AG04450 (cell line): ENCODE measurements at regions of chr10 and their contacts with region 1.

Region 1: GRCh38 chr10:124403548-124403947 is 15.2 kb downstream of the OAT start:
- DNase-seq: peak; percentile 45
- H3K4me3 ChIP-seq: no peak overlapping the region
- H3K27ac ChIP-seq: no peak overlapping the region
- H3K27me3 ChIP-seq: no peaks in the 10 kb centered on the region
- CTCF ChIP-seq: peak; percentile 75

Region 2: GRCh38 chr10:123994417-123995081 is 409.0 kb before region 1 on chr10:
- CTCF ChIA-PET with region 1: interaction called, 57 read pairs
- POLR2A ChIA-PET with region 1: no interaction called
- DNase-seq: peak; percentile 61
- H3K4me3 ChIP-seq: peak overlapping the region; percentile 41
- H3K27ac ChIP-seq: peak overlapping the region; percentile 93
- H3K27me3 ChIP-seq: peaks cover 10% of the 10 kb centered on the region
- CTCF ChIP-seq: peak; percentile 91

Region 3: DNA sequence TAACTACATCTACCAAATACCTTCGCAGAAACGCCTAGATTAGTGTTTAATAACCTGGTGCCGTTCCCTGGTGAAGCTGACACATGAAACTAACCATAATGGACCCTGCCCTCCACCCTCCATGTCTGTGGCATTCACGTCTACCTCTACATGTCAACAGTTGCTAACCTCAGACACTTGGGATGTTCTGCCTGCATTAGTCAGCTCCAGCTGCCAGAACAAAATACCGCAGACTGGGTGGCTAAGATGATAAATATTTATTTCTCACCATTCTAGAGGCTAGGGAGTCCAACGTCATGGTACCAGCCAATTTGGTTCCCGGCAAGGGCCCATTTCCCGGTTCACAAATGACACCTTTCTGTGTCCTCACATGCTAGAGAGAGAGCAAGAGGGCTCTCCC is 191.6 kb before region 1 on chr10:
- CTCF ChIA-PET with region 1: no interaction called
- POLR2A ChIA-PET with region 1: no interaction called
- DNase-seq: no peak
- H3K4me3 ChIP-seq: no peak overlapping the region
- H3K27ac ChIP-seq: no peak overlapping the region
- H3K27me3 ChIP-seq: no peaks in the 10 kb centered on the region
- CTCF ChIP-seq: no peak

Region 4: DNA sequence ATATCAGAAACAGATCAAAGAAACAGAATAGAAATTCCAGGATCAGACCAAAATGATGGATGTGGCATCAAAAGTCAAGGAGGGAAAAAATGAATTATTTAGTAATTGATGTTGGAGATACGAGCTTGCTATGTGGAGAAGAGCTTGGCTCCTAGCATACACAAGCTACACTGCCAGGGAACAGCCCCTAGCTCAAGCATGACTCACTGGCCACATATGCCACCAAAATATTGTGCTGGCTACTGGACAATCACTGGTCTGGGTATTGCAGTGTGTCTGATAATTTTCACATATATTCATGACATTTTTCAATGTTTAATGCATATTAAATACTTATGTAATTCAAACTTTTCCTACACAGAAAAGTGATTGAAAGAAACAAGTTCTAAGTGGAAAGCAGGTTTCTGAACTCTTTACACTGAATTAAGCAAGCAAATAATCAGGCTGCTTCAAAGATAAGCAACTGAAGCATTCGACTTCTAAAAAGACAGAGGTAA is 44.2 kb before region 1 on chr10:
- CTCF ChIA-PET with region 1: no interaction called
- POLR2A ChIA-PET with region 1: no interaction called
- DNase-seq: no peak
- H3K4me3 ChIP-seq: no peak overlapping the region
- H3K27ac ChIP-seq: no peak overlapping the region
- H3K27me3 ChIP-seq: peaks cover 3% of the 10 kb centered on the region
- CTCF ChIP-seq: no peak

Region 5: DNA sequence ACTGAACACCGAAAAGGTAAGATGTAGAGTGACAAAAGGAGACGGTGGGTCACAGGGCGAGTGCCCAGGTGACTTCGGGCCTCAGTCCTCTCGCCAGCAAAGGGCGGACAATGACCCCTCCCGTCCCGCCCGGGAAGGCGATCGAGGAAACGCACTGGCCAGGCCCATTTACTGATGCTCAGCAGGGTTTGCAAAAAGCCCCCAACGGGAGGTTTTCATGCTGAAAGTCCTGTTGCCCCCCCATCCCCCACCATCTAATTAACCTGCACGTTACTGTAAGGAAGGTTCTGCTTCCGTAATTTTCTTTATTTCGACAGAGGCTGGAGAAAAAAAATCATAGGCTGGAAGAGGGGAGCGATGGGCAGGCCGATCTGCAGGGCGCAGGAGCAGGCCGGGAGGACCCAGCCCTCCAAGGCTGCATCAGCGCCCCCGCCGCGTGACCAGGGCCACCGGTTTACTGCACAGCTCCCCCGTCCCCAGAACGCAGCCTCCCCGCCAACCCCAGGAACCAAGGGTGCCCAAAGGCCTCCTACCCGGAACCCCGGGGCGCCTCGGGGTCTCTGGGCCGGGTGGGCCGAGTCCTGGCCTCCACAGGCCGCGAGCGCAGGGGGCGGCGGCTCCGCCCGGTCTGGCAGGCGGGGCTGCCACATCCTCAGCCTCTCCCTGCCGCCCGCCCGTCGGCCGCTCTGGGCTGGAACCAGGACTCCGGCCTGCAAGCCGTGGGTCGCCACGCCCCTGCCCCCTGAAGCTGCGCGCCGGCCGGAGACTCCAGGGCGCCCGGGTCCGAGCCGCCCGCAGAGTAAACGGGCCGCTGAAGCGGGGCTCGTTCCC is 14.6 kb after region 1 on chr10:
- CTCF ChIA-PET with region 1: interaction called, 78 read pairs
- POLR2A ChIA-PET with region 1: interaction called, 5 read pairs
- DNase-seq: no peak
- H3K4me3 ChIP-seq: peak overlapping the region; percentile 70
- H3K27ac ChIP-seq: peak overlapping the region; percentile 77
- H3K27me3 ChIP-seq: peaks cover 11% of the 10 kb centered on the region
- CTCF ChIP-seq: peak; percentile 8; the same call in 1 of the 2 replicates